Activated T-helper 2 cell treated with anti-CD3 and anti-CD28 coated beads, Interferon-gamma antibody, Interleukin-2, Interleukin-4, amounts not matched to agents 10 μg/mL and 5 μg/mL and 100 μg/mL, durations not matched to agents 14 hours and 24 hours and 36 hours (primary cell): ENCODE measurements at regions of chr19 and their contacts with region 1.

Region 1: GRCh38 chr19:5904352-5905113 is at the start of gene VMAC:
- DNase-seq: peak; percentile 100
- H3K4me3 Mint-ChIP-seq: peak within 1 kb of the TSS; percentile 97
- H3K27ac Mint-ChIP-seq: peak within 1 kb of the TSS; percentile 97
- H3K4me1 Mint-ChIP-seq: peaks cover 19% of the 10 kb centered on the region
- H3K27me3 Mint-ChIP-seq: no peaks in the 10 kb centered on the region
- total RNA-seq, gene VMAC: 3.1 and 3.8 TPM in 2 replicates

Region 2: DNA sequence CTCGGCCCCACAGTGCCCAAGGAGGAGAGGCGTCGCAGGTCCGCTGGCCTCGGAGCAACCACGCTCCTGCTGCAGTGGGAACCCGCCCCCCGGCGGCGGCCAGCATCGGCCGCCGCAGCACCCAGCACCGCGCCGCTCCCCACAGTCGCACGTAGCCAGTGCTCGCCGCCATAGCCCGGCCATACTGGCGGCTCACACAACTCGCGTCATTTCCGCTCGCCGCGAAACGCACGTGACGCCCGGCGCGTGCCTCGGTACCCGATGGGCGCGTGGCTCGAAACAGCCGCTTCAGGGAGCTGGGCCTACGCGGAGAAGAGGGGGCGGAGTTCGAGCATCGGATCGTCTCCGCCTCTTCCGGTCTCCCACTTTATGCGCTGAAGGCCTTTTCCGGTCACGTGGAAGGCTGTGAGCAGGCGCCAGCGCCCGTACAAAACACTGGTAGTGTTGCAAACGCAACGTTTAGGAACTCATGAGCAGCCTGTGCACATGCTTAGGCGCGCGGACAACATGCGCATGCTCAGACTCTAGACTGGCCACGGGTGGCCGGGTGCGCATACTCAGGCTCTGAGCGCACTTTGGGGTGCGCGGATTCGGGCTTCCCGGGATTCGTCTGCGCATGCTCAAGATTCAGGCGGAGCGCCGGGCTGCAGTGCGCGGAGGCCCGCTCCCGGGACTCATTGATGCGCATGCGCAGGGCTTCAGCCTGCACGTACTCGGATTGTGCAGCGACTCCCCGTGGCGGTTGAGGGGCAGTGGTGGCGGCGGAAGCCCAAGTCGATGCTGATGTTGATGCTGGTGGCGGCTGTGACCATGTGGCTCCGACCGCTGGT is 184.4 kb before region 1 on chr19 and contains the starts of genes CATSPERD and LONP1:
- intact Hi-C with region 1: loop called (anchors 1 kb)
- DNase-seq: peak; percentile 97
- H3K4me3 Mint-ChIP-seq: peak within 1 kb of the TSS; percentile 93
- H3K27ac Mint-ChIP-seq: peak within 1 kb of the TSS; percentile 94
- H3K4me1 Mint-ChIP-seq: peaks cover 20% of the 10 kb centered on the region
- H3K27me3 Mint-ChIP-seq: no peaks in the 10 kb centered on the region
- total RNA-seq, gene CATSPERD: not detected in 2 replicates
- total RNA-seq, gene LONP1: 192 and 196 TPM in 2 replicates

Region 3: GRCh38 chr19:5790573-5791520 is 113.7 kb before region 1 on chr19 and contains the start of gene DUS3L:
- intact Hi-C with region 1: loop called (anchors 5 kb)
- DNase-seq: peak; percentile 95
- H3K4me3 Mint-ChIP-seq: peak within 1 kb of the TSS; percentile 98
- H3K27ac Mint-ChIP-seq: peak within 1 kb of the TSS; percentile 100
- H3K4me1 Mint-ChIP-seq: peaks cover 5% of the 10 kb centered on the region
- H3K27me3 Mint-ChIP-seq: no peaks in the 10 kb centered on the region
- total RNA-seq, gene DUS3L: 74.0 and 84.3 TPM in 2 replicates

Region 4: GRCh38 chr19:5803752-5804515 is 100.6 kb before region 1 on chr19:
- intact Hi-C with region 1: loop called (anchors 1 kb)
- DNase-seq: peak; percentile 93
- H3K4me3 Mint-ChIP-seq: peak overlapping the region; percentile 73
- H3K27ac Mint-ChIP-seq: peak overlapping the region; percentile 62
- H3K4me1 Mint-ChIP-seq: peaks cover 16% of the 10 kb centered on the region
- H3K27me3 Mint-ChIP-seq: peaks cover 21% of the 10 kb centered on the region

Region 5: DNA sequence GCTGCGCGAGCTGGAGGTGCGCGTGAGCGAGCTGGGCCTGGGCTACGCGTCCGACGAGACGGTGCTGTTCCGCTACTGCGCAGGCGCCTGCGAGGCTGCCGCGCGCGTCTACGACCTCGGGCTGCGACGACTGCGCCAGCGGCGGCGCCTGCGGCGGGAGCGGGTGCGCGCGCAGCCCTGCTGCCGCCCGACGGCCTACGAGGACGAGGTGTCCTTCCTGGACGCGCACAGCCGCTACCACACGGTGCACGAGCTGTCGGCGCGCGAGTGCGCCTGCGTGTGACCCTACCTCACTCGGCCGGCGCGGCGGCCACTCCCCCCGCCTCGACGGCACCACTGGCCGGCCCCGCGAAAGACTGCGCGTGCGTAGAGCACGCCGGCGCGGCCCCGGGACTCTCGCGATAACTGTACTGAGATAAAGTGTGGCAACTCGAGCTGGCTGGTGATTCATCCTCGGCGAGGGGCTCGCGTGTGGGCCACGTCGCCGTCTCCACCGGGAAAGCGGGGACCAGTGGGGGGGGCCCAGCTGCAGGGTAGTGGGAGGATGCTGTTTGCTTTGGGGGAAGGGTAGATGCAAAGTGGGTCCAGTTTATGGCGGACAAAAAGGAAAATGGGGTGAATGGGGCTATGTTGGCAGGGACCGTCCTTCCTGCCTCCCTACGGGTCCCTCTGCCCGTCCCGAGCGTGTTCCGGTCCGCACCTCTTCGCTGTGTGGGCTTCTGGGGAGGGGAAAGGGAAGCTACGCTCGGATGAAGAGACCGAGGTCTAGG is 76.5 kb before region 1 on chr19:
- intact Hi-C with region 1: loop called (anchors 1 kb)
- DNase-seq: peak; percentile 96
- H3K4me3 Mint-ChIP-seq: peak overlapping the region; percentile 99
- H3K27ac Mint-ChIP-seq: peak overlapping the region; percentile 99
- H3K4me1 Mint-ChIP-seq: peaks cover 5% of the 10 kb centered on the region
- H3K27me3 Mint-ChIP-seq: no peaks in the 10 kb centered on the region

Region 6: GRCh38 chr19:5953680-5954213 is 49.2 kb after region 1 on chr19:
- intact Hi-C with region 1: loop called (anchors 2 kb)
- DNase-seq: peak; percentile 23
- H3K4me3 Mint-ChIP-seq: peak overlapping the region; percentile 76
- H3K27ac Mint-ChIP-seq: peak overlapping the region; percentile 94
- H3K4me1 Mint-ChIP-seq: peaks cover 66% of the 10 kb centered on the region
- H3K27me3 Mint-ChIP-seq: no peaks in the 10 kb centered on the region

Region 7: DNA sequence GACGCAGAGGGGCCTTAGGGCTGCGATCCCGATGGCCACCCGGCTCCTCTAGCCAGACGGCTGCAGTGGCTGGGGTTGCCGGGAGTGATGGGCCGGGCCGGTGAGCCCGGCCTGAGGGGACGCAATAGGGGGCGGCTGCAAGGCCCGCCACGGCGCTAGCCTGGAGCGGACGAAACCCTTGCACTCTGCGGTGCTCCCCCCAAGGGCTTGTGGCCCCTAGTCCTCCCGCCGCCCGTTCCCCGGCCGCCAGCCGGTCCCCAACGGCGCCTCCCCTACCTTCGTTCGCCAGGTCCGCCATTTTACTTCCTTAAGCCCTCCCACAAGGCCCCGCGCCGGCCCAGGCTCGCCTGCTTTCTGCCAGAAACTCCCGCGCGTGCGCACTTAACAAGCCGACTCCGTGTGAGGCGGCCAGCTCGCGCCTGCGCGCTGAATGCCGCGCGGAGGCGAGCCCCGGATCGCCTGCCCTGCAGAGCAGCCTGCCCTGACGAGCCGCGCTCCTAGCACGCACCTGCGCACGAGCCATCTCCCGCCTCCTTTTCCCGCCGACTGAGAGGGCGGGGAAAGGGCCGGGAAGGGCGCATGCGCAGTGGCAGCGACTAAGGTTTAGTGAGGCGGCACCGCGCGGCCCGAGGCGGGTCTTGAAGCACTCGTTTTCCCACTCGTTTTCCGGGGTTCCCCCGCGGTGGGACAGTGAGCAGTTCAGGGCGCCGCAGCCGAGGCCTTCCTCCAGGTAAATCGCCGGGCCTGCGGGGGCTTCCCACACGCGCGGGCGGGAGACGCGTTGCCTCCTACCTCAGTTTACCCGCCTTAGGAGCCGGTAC is 73.5 kb after region 1 on chr19 and contains the start of gene RANBP3:
- intact Hi-C with region 1: loop called (anchors 5 kb)
- DNase-seq: peak; percentile 99
- H3K4me3 Mint-ChIP-seq: peak within 1 kb of the TSS; percentile 98
- H3K27ac Mint-ChIP-seq: peak within 1 kb of the TSS; percentile 93
- H3K4me1 Mint-ChIP-seq: peaks cover 45% of the 10 kb centered on the region
- H3K27me3 Mint-ChIP-seq: no peaks in the 10 kb centered on the region
- total RNA-seq, gene RANBP3: 98.2 and 105 TPM in 2 replicates